ENCODE measurements at regions of chr15 and their contacts with region 1.

Region 1: GRCh38 chr15:73368301-73369136 is at the start of gene HCN4:
- DNase-seq: no peak
- ATAC-seq: peak; percentile 48
- H3K4me3 ChIP-seq: peak within 1 kb of the TSS; percentile 14 to 38; a peak in 3 of 4 replicates
- H3K27ac ChIP-seq: no peak within 1 kb of the TSS
- H3K4me1 ChIP-seq: peaks cover 5% of the 10 kb centered on the region
- H3K27me3 ChIP-seq: peaks cover 10% of the 10 kb centered on the region; the same call in 1 of the 2 replicates
- CTCF ChIP-seq: no peak
- total RNA-seq, gene HCN4: 0.15 TPM

Region 2: GRCh38 chr15:73240866-73241499 is 127.5 kb before region 1 on chr15:
- CTCF ChIA-PET with region 1: no interaction called
- POLR2A ChIA-PET with region 1: no interaction called
- in situ Hi-C with region 1: no loop called
- intact Hi-C with region 1: no loop called
- DNase-seq: no peak
- ATAC-seq: no peak; the same call in 1 of the 2 replicates
- H3K4me3 ChIP-seq: no peak overlapping the region
- H3K27ac ChIP-seq: no peak overlapping the region
- H3K4me1 ChIP-seq: no peaks in the 10 kb centered on the region
- H3K27me3 ChIP-seq: peaks cover 4% of the 10 kb centered on the region; the same call in 1 of the 2 replicates
- CTCF ChIP-seq: peak; percentile 83

Region 3: DNA sequence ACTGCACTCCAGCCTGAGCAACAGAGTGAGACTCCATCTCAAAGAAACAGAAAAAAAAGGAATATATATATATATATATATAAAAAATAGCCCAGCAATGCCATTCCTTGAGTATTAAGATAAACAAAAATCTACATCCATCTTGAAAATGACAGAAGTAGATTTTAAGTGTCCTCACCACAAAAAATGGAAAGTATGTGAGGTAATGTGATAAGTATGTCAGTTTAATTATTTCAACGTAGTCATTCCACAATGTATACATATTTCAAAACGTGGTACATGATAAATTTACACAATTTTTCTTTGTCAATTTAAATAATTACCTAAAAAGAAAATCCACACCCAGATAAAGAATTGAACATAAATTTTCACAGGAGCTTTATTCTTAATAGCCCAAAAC is 54.7 kb before region 1 on chr15:
- CTCF ChIA-PET with region 1: no interaction called
- POLR2A ChIA-PET with region 1: interaction called, 12 read pairs
- in situ Hi-C with region 1: no loop called
- intact Hi-C with region 1: no loop called
- DNase-seq: no peak
- ATAC-seq: no peak
- H3K4me3 ChIP-seq: no peak overlapping the region
- H3K27ac ChIP-seq: no peak overlapping the region
- H3K4me1 ChIP-seq: no peaks in the 10 kb centered on the region
- H3K27me3 ChIP-seq: no peaks in the 10 kb centered on the region
- CTCF ChIP-seq: no peak

Region 4: GRCh38 chr15:73437543-73438109 is 69.1 kb after region 1 on chr15:
- CTCF ChIA-PET with region 1: no interaction called
- POLR2A ChIA-PET with region 1: no interaction called
- in situ Hi-C with region 1: no loop called
- intact Hi-C with region 1: no loop called
- DNase-seq: no peak
- ATAC-seq: no peak
- H3K4me3 ChIP-seq: no peak overlapping the region
- H3K27ac ChIP-seq: no peak overlapping the region
- H3K4me1 ChIP-seq: no peaks in the 10 kb centered on the region
- H3K27me3 ChIP-seq: peaks cover 19% of the 10 kb centered on the region
- CTCF ChIP-seq: no peak

Region 5: GRCh38 chr15:73873889-73874511 is 505.5 kb after region 1 on chr15:
- CTCF ChIA-PET with region 1: no interaction called
- POLR2A ChIA-PET with region 1: no interaction called
- in situ Hi-C with region 1: no loop called
- intact Hi-C with region 1: no loop called
- DNase-seq: peak; percentile 46
- ATAC-seq: peak; percentile 74
- H3K4me3 ChIP-seq: no peak overlapping the region
- H3K27ac ChIP-seq: no peak overlapping the region
- H3K4me1 ChIP-seq: no peaks in the 10 kb centered on the region
- H3K27me3 ChIP-seq: peaks cover 37% of the 10 kb centered on the region
- CTCF ChIP-seq: peak; percentile 80

Measured in Panc1 (cell line).